CD8-positive, alpha-beta T cell (primary cell): ENCODE measurements at regions of chr2 and their contacts with region 1.

Region 1: GRCh38 chr2:29223851-29224694 is 108.9 kb downstream of the CLIP4 start:
- DNase-seq: no peak
- ATAC-seq: no peak
- H3K4me3 ChIP-seq: no peak overlapping the region
- H3K4me3 Mint-ChIP-seq: no peak overlapping the region
- H3K27ac ChIP-seq: no peak overlapping the region
- H3K27ac Mint-ChIP-seq: no peak overlapping the region
- H3K4me1 ChIP-seq: no peaks in the 10 kb centered on the region
- H3K4me1 Mint-ChIP-seq: no peaks in the 10 kb centered on the region
- H3K27me3 ChIP-seq: no peaks in the 10 kb centered on the region
- H3K27me3 Mint-ChIP-seq: peaks cover 23% of the 10 kb centered on the region
- CTCF ChIP-seq: no peak

Region 2: GRCh38 chr2:27811768-27812167 is 1412.3 kb before region 1 on chr2:
- CTCF ChIA-PET with region 1: no interaction called
- POLR2A ChIA-PET with region 1: no interaction called
- intact Hi-C with region 1: no loop called
- DNase-seq: no peak
- ATAC-seq: no peak
- H3K4me3 ChIP-seq: no peak overlapping the region
- H3K4me3 Mint-ChIP-seq: no peak overlapping the region
- H3K27ac ChIP-seq: no peak overlapping the region
- H3K27ac Mint-ChIP-seq: no peak overlapping the region
- H3K4me1 ChIP-seq: no peaks in the 10 kb centered on the region
- H3K4me1 Mint-ChIP-seq: no peaks in the 10 kb centered on the region
- H3K27me3 ChIP-seq: no peaks in the 10 kb centered on the region
- H3K27me3 Mint-ChIP-seq: no peaks in the 10 kb centered on the region
- CTCF ChIP-seq: no peak

Region 3: GRCh38 chr2:28325567-28326468 is 898.3 kb before region 1 on chr2:
- CTCF ChIA-PET with region 1: no interaction called
- POLR2A ChIA-PET with region 1: no interaction called
- intact Hi-C with region 1: loop called in 1 of 2 experiments (anchors 10 kb)
- DNase-seq: peak in 1 of 9 experiments; percentile 27
- ATAC-seq: no peak
- H3K4me3 ChIP-seq: no peak overlapping the region
- H3K4me3 Mint-ChIP-seq: no peak overlapping the region
- H3K27ac ChIP-seq: no peak overlapping the region
- H3K27ac Mint-ChIP-seq: no peak overlapping the region
- H3K4me1 ChIP-seq: no peaks in the 10 kb centered on the region
- H3K4me1 Mint-ChIP-seq: no peaks in the 10 kb centered on the region
- H3K27me3 ChIP-seq: no peaks in the 10 kb centered on the region
- H3K27me3 Mint-ChIP-seq: no peaks in the 10 kb centered on the region
- CTCF ChIP-seq: no peak